G401 (cell line): ENCODE measurements at regions of chr3 and their contacts with region 1.

Region 1: GRCh38 chr3:51591231-51591630 is 52.7 kb downstream of the RAD54L2 start:
- DNase-seq: no peak

Region 2: GRCh38 chr3:51630513-51630912 is 39.3 kb after region 1 on chr3:
- in situ Hi-C with region 1: loop called (anchors 5 kb)
- DNase-seq: no peak